ENCODE measurements at regions of chr12 and their contacts with region 1.

Region 1: DNA sequence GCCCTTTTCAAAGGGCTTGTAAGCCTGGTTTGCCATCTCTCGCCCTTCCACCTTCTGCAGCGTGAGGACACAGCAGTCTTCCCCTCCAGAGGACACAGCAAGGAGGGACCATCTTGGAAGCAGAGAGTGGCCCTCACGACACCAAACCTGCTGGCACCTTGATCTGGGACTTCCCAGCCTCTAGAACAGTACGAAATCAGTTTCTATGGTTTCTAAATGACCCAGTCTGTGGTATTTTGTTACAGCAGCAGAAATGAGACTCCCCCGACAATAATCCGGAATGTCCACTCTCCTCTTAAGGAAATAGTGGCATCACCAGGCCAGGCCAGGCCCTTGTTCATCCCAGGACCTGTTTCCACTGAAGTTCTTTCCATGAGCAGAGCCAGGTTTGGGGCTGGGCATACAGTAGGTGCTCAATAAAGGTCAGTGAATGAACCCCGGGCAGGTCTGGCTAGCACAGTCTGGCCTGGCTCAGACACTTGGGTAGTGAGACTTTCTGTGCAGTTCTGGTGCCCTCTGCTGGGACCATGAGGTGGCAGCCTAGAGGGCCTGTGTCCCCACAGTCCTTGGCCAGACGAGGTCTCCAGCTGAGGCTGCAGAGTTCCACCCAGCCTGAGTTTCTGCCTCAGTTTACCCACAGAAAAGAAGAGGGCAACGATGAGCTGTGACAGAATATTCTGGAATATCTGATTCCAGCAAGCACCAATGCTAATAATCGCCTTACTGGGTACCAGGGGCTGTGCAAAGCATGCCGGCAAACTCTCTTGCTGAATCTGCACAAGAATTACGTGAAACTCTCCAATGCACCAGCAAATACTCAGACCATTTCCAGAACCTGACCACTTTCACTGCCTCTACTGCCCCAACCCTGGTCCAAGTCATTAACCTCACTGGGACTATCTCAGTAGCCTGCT is 14.0 kb downstream of the ABCB9 start:
- DNase-seq: peak; percentile 72
- H3K4me3 ChIP-seq: no peak overlapping the region
- H3K27ac ChIP-seq: peak overlapping the region; percentile 12
- H3K4me1 ChIP-seq: no peaks in the 10 kb centered on the region
- H3K27me3 ChIP-seq: no peaks in the 10 kb centered on the region
- CTCF ChIP-seq: peak; percentile 83

Region 2: GRCh38 chr12:122642009-122642408 is 310.2 kb before region 1 on chr12:
- CTCF ChIA-PET with region 1: no interaction called
- POLR2A ChIA-PET with region 1: no interaction called
- intact Hi-C with region 1: loop called (anchors 2 kb)
- DNase-seq: no peak
- H3K4me3 ChIP-seq: no peak overlapping the region
- H3K27ac ChIP-seq: no peak overlapping the region
- H3K4me1 ChIP-seq: no peaks in the 10 kb centered on the region
- H3K27me3 ChIP-seq: no peaks in the 10 kb centered on the region
- CTCF ChIP-seq: no peak

Region 3: GRCh38 chr12:122793685-122794106 is 158.5 kb before region 1 on chr12:
- CTCF ChIA-PET with region 1: interaction called, 4 read pairs
- POLR2A ChIA-PET with region 1: no interaction called
- intact Hi-C with region 1: loop called (anchors 2 kb)
- DNase-seq: peak; percentile 70
- H3K4me3 ChIP-seq: no peak overlapping the region
- H3K27ac ChIP-seq: no peak overlapping the region
- H3K4me1 ChIP-seq: no peaks in the 10 kb centered on the region
- H3K27me3 ChIP-seq: no peaks in the 10 kb centered on the region
- CTCF ChIP-seq: peak; percentile 77

Region 4: DNA sequence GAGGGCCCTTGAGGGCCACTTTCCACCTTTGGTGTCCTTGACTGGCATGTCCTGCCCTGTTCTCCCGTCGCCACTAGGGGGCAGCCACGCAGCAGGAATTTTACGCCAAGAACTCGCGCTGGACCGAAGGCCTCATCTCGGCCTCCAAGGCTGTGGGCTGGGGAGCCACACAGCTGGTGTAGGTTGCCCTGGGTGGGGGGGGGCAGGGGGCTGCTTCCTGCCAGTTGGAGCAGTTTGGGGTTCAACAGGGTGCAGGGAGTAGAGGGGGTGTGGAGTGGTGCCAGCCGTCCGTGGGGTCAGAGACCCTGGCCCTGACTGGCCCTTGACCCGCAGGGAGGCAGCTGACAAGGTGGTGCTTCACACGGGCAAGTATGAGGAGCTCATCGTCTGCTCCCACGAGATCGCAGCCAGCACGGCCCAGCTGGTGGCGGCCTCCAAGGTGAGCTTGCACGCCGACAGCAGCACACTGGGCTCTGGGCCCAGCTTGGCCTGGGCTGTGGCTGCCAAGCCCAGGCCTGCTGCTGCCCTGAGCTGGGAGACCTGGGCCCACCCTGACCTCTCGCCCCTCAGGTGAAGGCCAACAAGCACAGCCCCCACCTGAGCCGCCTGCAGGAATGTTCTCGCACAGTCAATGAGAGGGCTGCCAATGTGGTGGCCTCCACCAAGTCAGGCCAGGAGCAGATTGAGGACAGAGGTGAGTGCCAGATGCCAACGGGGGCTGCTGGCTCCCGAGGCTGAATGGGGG is 91.7 kb before region 1 on chr12:
- CTCF ChIA-PET with region 1: interaction called, 5 read pairs
- POLR2A ChIA-PET with region 1: no interaction called
- intact Hi-C with region 1: loop called (anchors 1 kb)
- DNase-seq: peak; percentile 85
- H3K4me3 ChIP-seq: no peak overlapping the region
- H3K27ac ChIP-seq: no peak overlapping the region
- H3K4me1 ChIP-seq: no peaks in the 10 kb centered on the region
- H3K27me3 ChIP-seq: no peaks in the 10 kb centered on the region
- CTCF ChIP-seq: peak; percentile 92

Region 5: DNA sequence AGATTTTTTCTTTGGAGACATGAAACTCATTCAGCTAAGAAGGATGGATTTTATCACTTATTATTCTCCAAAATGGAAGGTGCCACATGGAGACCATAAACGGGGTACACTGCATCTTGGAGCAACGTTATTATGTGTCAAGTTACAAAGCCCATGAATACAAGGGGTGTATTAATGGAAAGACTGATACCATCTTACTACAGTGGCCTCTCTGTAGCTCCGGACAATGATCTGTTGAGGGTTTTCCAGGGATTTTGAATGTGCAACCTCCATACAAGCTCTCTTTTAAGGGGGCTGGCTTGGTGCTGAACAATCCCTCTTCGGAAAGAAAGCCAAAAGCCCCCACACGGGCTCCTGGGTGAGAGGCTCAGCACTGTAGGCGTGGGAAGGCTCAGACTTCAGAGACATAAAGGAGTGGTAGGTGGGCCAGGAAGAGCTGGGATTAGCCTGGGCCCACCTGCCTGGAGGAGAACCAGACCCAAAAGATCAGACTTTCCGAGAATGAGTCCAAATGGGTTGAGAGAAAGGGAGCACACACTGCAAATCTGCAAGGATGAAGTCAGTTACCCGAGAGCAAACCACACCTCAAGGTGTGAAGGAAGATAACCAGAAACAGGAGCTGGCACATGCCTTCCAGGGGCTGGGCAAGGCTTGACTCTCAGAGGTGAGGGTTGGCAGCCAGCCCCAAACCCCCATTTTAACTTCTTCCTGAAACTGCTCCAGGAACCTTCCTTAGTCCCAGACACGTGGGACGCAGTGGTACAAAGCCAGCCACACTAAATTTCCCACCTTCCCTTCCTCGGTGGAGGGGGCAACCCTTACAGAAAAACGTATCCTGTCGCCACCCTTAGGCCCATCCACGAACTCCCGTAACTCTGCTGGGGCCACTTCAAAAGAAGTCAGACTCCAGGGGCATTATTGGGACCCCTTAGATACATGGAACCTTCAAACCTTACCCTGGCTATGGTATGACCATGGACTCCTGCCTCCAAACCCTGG is 57.7 kb before region 1 on chr12:
- CTCF ChIA-PET with region 1: interaction called, 13 read pairs
- POLR2A ChIA-PET with region 1: no interaction called
- intact Hi-C with region 1: no loop called
- DNase-seq: no peak
- H3K4me3 ChIP-seq: peak overlapping the region; percentile 72
- H3K27ac ChIP-seq: peak overlapping the region; percentile 93
- H3K4me1 ChIP-seq: peaks cover 38% of the 10 kb centered on the region
- H3K27me3 ChIP-seq: no peaks in the 10 kb centered on the region
- CTCF ChIP-seq: no peak

Region 6: GRCh38 chr12:122917504-122918121 is 34.6 kb before region 1 on chr12:
- CTCF ChIA-PET with region 1: interaction called, 11 read pairs
- POLR2A ChIA-PET with region 1: no interaction called
- intact Hi-C with region 1: no loop called
- DNase-seq: no peak
- H3K4me3 ChIP-seq: no peak overlapping the region
- H3K27ac ChIP-seq: no peak overlapping the region
- H3K4me1 ChIP-seq: no peaks in the 10 kb centered on the region
- H3K27me3 ChIP-seq: no peaks in the 10 kb centered on the region
- CTCF ChIP-seq: no peak

Region 7: GRCh38 chr12:122963953-122964301 is 11.7 kb after region 1 on chr12:
- CTCF ChIA-PET with region 1: no interaction called
- POLR2A ChIA-PET with region 1: no interaction called
- intact Hi-C with region 1: no loop called
- DNase-seq: no peak
- H3K4me3 ChIP-seq: no peak overlapping the region
- H3K27ac ChIP-seq: no peak overlapping the region
- H3K4me1 ChIP-seq: peaks cover 12% of the 10 kb centered on the region
- H3K27me3 ChIP-seq: no peaks in the 10 kb centered on the region
- CTCF ChIP-seq: no peak

Region 8: DNA sequence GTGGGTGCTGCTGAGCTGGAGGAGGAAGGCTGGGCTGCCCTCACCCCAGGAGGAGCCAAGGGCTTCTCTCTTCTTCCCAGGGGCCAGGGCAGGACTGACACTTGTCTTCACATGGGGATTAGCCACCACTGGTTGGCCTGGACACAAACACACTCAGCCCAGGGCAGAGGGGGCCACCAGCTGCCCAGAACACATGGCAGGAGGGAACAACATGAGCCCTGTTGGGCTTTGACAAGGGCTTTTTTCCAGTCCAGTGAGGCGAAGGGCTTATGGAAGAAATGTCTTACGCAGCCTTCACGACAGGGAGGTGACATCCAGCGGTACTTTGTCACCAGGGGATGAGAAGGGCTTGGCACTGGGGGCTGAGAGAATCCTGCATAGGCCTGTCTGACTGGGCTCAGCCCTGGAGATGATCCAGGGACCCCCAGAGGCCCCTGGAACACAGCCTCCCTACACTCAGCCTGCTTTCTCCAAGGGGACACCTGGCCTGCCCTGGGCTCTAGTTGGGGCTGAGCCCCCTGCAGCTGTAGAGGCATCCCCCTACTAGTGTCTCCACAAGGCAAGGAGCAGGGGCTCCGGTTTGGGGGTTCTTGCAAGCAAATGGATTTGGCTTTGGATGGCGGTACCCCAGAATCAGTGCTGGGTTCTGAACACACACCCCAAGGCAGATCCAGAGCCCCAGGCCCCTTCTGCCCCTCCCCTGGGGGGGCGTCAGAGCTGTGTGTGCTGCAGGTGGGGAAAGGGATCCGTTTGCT is 47.1 kb after region 1 on chr12:
- CTCF ChIA-PET with region 1: no interaction called
- POLR2A ChIA-PET with region 1: no interaction called
- intact Hi-C with region 1: no loop called
- DNase-seq: no peak
- H3K4me3 ChIP-seq: no peak overlapping the region
- H3K27ac ChIP-seq: no peak overlapping the region
- H3K4me1 ChIP-seq: no peaks in the 10 kb centered on the region
- H3K27me3 ChIP-seq: no peaks in the 10 kb centered on the region
- CTCF ChIP-seq: no peak